ENCODE measurements at regions of chr12 and their contacts with region 1.

Region 1: GRCh38 chr12:19546027-19546426 is 106.7 kb downstream of the AEBP2 start:
- DNase-seq: no peak
- H3K4me3 ChIP-seq: no peak overlapping the region
- H3K27me3 ChIP-seq: no peaks in the 10 kb centered on the region
- CTCF ChIP-seq: no peak

Region 2: DNA sequence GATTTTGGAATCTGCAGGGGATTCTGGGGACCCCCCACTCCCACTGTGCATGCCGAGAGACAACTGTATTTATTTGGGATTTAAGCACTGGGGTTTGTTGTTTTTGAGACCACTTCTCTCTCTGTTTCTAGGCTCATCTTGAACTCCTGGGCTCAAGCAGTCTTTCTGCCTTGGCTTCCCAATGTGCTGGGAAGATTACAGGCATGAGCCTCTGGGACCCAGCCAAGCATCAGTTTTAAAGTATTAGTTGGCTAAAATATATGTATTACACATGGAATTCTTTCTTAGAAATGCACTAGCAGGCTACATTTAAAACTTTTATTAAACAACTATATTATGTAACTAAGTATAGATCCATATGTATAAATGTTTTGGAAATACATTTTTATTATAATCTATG is 28.4 kb before region 1 on chr12:
- CTCF ChIA-PET with region 1: no interaction called
- POLR2A ChIA-PET with region 1: interaction called, 10 read pairs
- DNase-seq: no peak
- H3K4me3 ChIP-seq: no peak overlapping the region
- H3K27me3 ChIP-seq: no peaks in the 10 kb centered on the region
- CTCF ChIP-seq: no peak

Measured in BJ (cell line).